Activated T-helper 1 cell treated with anti-CD3 and anti-CD28 coated beads, Interleukin-12 subunit alpha, Interleukin-12 subunit beta, Interleukin-2, Interleukin-4 antibody, amounts not matched to agents 30 ng/mL and 10 ng/mL and 1 ng/mL, durations not matched to agents 14 hours and 24 hours and 36 hours (primary cell): ENCODE measurements at regions of chr16 and their contacts with region 1.

Region 1: GRCh38 chr16:89350701-89351380 is 133.3 kb downstream of the ZNF778 start:
- DNase-seq: no peak
- H3K4me3 Mint-ChIP-seq: peak overlapping the region; percentile 25
- H3K27ac Mint-ChIP-seq: peak overlapping the region; percentile 85
- H3K4me1 Mint-ChIP-seq: peaks cover 68% of the 10 kb centered on the region
- H3K27me3 Mint-ChIP-seq: no peaks in the 10 kb centered on the region

Region 2: GRCh38 chr16:89277641-89278341 is 73.0 kb before region 1 on chr16:
- intact Hi-C with region 1: no loop called
- DNase-seq: no peak
- H3K4me3 Mint-ChIP-seq: no peak overlapping the region
- H3K27ac Mint-ChIP-seq: no peak overlapping the region
- H3K4me1 Mint-ChIP-seq: no peaks in the 10 kb centered on the region
- H3K27me3 Mint-ChIP-seq: no peaks in the 10 kb centered on the region

Region 3: DNA sequence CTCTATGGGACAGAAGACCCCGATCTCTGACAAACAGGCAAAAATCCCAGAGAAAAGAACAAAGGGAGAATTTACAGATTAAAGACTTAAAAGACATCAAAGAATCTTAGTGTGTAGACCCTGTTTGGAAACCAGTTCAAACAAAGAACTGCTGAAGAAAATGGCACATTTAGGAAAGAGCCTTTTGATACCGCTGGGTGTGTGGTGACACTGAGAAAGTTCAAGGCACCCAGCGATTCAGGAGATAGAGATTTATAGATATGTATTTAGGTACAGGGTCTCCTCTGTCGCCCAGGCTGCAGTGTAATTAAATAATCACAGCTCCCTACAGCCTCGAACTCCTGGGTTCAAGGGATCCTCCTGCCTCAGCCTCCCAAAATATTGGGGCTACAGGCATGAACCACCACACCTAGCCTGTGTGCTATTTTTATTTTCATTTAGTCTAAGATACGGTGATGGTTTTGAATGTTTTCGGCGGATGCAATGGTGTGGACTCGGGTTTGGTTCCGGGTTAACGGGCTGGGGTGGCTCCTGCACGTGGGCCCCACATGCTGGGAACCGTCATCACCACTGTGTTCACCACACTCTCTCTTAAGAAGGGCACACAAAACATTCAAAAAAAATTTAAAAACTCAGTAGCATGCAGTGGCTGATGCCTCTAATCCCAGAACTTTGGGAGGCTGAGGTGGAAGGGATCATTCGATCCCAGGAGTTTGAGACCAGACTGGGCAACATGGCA is 19.3 kb before region 1 on chr16:
- intact Hi-C with region 1: loop called (anchors 1 kb)
- DNase-seq: no peak
- H3K4me3 Mint-ChIP-seq: peak overlapping the region; percentile 31
- H3K27ac Mint-ChIP-seq: peak overlapping the region; percentile 2
- H3K4me1 Mint-ChIP-seq: peaks cover 71% of the 10 kb centered on the region
- H3K27me3 Mint-ChIP-seq: no peaks in the 10 kb centered on the region